Calu3 (cell line): ENCODE measurements at regions of chr5 and their contacts with region 1.

Region 1: DNA sequence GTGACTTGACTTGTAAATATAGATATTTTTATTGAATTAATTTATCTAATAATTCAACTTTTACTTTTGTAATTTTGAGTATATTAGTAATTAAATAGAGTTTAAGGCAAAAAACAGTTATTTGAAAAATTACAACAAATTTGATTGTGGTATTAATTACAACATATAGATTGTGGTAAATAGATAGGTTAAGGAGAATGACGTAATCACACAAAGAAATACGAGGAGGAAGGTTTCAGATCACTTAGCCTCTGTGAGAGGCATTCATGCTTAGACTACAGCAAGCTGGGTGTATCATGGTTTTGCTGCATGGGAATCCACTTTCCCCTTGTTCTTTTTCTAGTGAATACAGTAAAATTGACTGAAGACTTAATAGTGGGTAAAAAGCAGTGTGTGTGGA is 878.4 kb upstream of the EDIL3 start:
- DNase-seq: no peak
- H3K4me3 Mint-ChIP-seq: no peak overlapping the region
- H3K27ac Mint-ChIP-seq: no peak overlapping the region
- H3K4me1 Mint-ChIP-seq: no peaks in the 10 kb centered on the region
- H3K27me3 Mint-ChIP-seq: no peaks in the 10 kb centered on the region
- CTCF ChIP-seq: no peak

Region 2: GRCh38 chr5:84017523-84018230 is 1245.4 kb before region 1 on chr5:
- CTCF ChIA-PET with region 1: no interaction called
- intact Hi-C with region 1: no loop called
- DNase-seq: no peak
- H3K4me3 Mint-ChIP-seq: no peak overlapping the region
- H3K27ac Mint-ChIP-seq: no peak overlapping the region
- H3K4me1 Mint-ChIP-seq: peaks cover 12% of the 10 kb centered on the region
- H3K27me3 Mint-ChIP-seq: no peaks in the 10 kb centered on the region
- CTCF ChIP-seq: no peak

Region 3: DNA sequence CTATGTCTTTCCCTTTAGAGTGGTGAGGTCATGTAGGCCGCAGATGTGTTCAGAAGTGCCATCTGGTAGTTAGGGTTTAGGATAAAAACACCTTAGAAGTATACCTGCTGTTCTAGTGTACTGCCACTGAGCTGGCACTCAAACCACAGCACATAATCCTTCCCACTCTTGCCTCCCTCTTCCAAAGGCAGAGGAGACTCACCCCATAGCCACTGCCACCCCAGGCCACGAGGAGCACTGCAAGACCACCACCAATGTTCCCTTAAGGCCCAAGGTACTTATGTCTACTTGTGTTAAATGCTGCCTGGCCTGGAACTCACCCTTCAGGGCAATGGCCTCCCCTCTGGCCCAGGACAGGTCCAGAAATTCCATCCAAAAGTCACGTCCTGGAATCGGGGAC is 498.9 kb before region 1 on chr5:
- CTCF ChIA-PET with region 1: no interaction called
- intact Hi-C with region 1: no loop called
- DNase-seq: no peak
- H3K4me3 Mint-ChIP-seq: no peak overlapping the region
- H3K27ac Mint-ChIP-seq: no peak overlapping the region
- H3K4me1 Mint-ChIP-seq: peaks cover 7% of the 10 kb centered on the region
- H3K27me3 Mint-ChIP-seq: no peaks in the 10 kb centered on the region
- CTCF ChIP-seq: no peak

Region 4: DNA sequence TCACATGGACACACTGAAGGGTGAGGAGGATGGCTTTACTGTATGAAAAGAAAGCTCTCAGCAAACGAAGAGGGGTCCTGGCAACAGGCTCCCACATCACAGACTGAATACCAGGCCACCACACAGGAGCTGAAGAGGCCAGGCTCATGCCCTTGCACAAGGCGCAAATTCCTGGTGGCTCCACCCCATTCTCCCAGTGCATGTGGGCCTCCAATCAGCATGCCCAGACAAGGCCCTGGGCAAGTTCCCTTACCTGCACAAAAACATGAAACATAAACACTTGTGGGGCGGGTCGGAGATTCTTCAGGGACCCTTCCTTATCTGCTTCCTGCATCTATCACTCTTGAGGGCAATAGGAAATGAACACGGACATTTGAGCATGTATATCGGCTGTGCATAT is 57.4 kb after region 1 on chr5:
- CTCF ChIA-PET with region 1: interaction called, 10 read pairs
- intact Hi-C with region 1: no loop called
- DNase-seq: no peak
- H3K4me3 Mint-ChIP-seq: no peak overlapping the region
- H3K27ac Mint-ChIP-seq: no peak overlapping the region
- H3K4me1 Mint-ChIP-seq: no peaks in the 10 kb centered on the region
- H3K27me3 Mint-ChIP-seq: no peaks in the 10 kb centered on the region
- CTCF ChIP-seq: no peak